Naive thymus-derived CD4-positive, alpha-beta T cell (primary cell): ENCODE measurements at regions of chr4 and their contacts with region 1.

Region 1: GRCh38 chr4:102500696-102501446 is at the start of gene NFKB1:
- DNase-seq: peak; percentile 64 to 95 (median 79)
- ATAC-seq: peak; percentile 85
- H3K4me3 ChIP-seq: peak within 1 kb of the TSS; percentile 96
- H3K4me3 Mint-ChIP-seq: peak within 1 kb of the TSS; percentile 93 to 98 (median 97)
- H3K27ac ChIP-seq: peak within 1 kb of the TSS; percentile 100
- H3K27ac Mint-ChIP-seq: peak within 1 kb of the TSS; percentile 95 to 99 (median 96)
- H3K4me1 ChIP-seq: peaks cover 6 to 22% of the 10 kb centered on the region in 2 donors
- H3K4me1 Mint-ChIP-seq: peaks cover 16 to 35% (median 31%) of the 10 kb centered on the region in 7 donors
- H3K27me3 ChIP-seq: no peaks in the 10 kb centered on the region
- H3K27me3 Mint-ChIP-seq: no peaks in the 10 kb centered on the region
- total RNA-seq, gene NFKB1: 80.9 to 167 (median 136) TPM

Region 2: DNA sequence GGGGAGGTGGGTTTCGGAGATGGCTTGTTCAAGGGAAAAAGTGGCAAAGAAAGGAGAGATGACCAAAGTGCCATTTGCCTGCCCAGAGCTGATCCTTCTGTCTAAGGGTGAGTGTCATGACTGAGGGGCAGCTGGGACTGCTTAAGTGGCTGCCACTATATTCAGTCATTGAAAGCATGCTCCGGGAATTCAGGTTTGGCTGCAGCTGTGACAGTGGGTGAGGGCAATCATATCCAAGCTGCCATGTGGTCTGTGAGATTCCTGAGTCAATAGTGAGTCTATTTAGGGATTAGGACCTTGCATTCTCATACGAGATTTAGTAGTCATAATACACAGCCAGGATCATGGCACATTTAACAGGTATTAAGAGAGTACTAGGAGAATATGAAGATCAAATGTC is 849.1 kb before region 1 on chr4:
- CTCF ChIA-PET with region 1: no interaction called
- POLR2A ChIA-PET with region 1: no interaction called
- intact Hi-C with region 1: no loop called
- DNase-seq: no peak
- ATAC-seq: no peak
- H3K4me3 ChIP-seq: no peak overlapping the region
- H3K4me3 Mint-ChIP-seq: no peak overlapping the region
- H3K27ac ChIP-seq: no peak overlapping the region
- H3K27ac Mint-ChIP-seq: no peak overlapping the region
- H3K4me1 ChIP-seq: no peaks in the 10 kb centered on the region
- H3K4me1 Mint-ChIP-seq: peaks cover 0 to 1% (median 0%) of the 10 kb centered on the region in 7 donors
- H3K27me3 ChIP-seq: no peaks in the 10 kb centered on the region
- H3K27me3 Mint-ChIP-seq: peaks cover 8 to 28% (median 15%) of the 10 kb centered on the region in 5 donors

Region 3: DNA sequence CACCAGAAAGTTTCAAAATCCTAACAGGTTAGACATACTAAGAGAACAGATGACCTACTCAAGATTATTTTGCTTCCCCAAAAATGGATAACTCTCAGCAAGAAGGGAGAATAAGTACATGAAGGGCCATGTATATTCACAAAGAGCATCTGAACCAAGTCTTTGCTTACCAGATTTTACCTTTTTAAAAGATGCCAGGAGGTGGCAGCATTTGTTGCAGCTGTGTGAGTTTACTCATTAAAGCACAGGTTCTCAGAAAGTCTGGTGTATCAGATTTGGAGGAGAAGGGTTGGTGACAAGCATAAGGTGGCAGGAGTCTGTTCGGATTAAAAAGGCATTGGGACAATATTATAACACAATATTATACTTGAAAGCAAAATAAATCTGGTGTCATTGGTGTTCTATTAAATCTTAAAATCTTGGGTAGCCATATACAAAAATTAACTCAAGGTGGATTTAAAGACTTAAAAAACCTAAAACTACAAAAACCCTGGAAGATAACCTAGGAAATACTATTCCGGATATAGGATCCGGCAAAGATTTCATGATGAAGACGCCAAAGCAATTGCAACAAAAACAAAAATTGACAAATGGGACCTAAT is 51.0 kb before region 1 on chr4:
- CTCF ChIA-PET with region 1: no interaction called
- POLR2A ChIA-PET with region 1: no interaction called
- intact Hi-C with region 1: loop called (anchors 2 kb)
- DNase-seq: peak in 7 of 9 donors; percentile 52 to 78 (median 71)
- ATAC-seq: peak; percentile 85
- H3K4me3 ChIP-seq: no peak overlapping the region
- H3K4me3 Mint-ChIP-seq: no peak overlapping the region
- H3K27ac ChIP-seq: no peak overlapping the region
- H3K27ac Mint-ChIP-seq: peak overlapping the region in 2 of 9 donors; percentile 16 to 56
- H3K4me1 ChIP-seq: no peaks in the 10 kb centered on the region
- H3K4me1 Mint-ChIP-seq: peaks cover 2 to 48% (median 9%) of the 10 kb centered on the region in 7 donors
- H3K27me3 ChIP-seq: no peaks in the 10 kb centered on the region
- H3K27me3 Mint-ChIP-seq: peaks cover 0 to 5% (median 0%) of the 10 kb centered on the region in 5 donors

Region 4: DNA sequence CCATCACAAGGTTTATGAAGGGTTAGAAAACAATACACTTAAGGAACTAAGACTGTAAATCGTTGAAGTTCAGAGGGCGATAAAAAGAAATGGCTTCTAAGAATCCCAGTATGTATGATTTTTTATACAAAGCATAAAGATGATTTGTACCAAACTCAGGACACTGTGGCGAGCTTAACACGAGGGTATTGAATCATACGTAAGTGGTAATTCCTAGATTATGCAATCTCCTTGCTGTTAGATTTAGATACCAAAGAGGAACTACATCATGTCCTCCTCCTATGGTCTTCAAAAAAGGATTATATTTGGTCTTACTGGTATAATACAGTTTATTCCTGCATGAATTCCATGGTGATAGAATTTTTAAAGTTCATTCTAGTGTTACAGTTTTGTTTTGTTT is 24.2 kb after region 1 on chr4:
- CTCF ChIA-PET with region 1: interaction called, 4 read pairs
- POLR2A ChIA-PET with region 1: interaction called, 46 read pairs
- intact Hi-C with region 1: loop called (anchors 1 kb)
- DNase-seq: no peak
- ATAC-seq: peak; percentile 51
- H3K4me3 ChIP-seq: no peak overlapping the region
- H3K4me3 Mint-ChIP-seq: peak overlapping the region in 3 of 10 donors; percentile 7 to 56 (median 8)
- H3K27ac ChIP-seq: no peak overlapping the region
- H3K27ac Mint-ChIP-seq: peak overlapping the region in 8 of 9 donors; percentile 11 to 95 (median 75)
- H3K4me1 ChIP-seq: peaks cover 11 to 63% of the 10 kb centered on the region in 2 donors
- H3K4me1 Mint-ChIP-seq: peaks cover 52 to 100% (median 90%) of the 10 kb centered on the region in 7 donors
- H3K27me3 ChIP-seq: no peaks in the 10 kb centered on the region
- H3K27me3 Mint-ChIP-seq: no peaks in the 10 kb centered on the region

Region 5: DNA sequence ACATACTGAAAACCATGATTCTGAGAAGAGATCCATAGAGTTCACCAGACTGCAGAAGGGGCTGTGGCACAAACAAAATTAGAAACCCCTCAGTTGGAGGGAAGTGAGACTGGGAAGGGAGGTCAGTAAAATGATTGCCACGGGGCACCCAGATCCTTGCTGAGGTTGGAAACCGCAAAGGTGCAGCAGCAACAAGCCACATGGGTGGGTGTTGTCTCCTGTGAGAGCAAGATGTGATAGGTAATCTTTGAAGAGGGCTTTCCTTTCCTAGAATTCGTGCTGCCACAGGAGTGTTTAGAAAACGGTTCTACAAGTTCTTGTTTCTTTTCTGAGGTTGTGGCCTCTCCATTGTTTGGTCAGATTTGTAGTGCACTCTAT is 85.8 kb after region 1 on chr4:
- CTCF ChIA-PET with region 1: no interaction called
- POLR2A ChIA-PET with region 1: interaction called, 3 read pairs
- intact Hi-C with region 1: loop called in 1 of 2 experiments (anchors 1 kb)
- DNase-seq: peak in 7 of 9 donors; percentile 10 to 56 (median 37)
- ATAC-seq: peak; percentile 74
- H3K4me3 ChIP-seq: peak overlapping the region; percentile 3
- H3K4me3 Mint-ChIP-seq: peak overlapping the region; percentile 25 to 78 (median 62)
- H3K27ac ChIP-seq: peak overlapping the region; percentile 58
- H3K27ac Mint-ChIP-seq: peak overlapping the region; percentile 68 to 93 (median 84)
- H3K4me1 ChIP-seq: peaks cover 48 to 61% of the 10 kb centered on the region in 2 donors
- H3K4me1 Mint-ChIP-seq: peaks cover 39 to 91% (median 84%) of the 10 kb centered on the region in 7 donors
- H3K27me3 ChIP-seq: no peaks in the 10 kb centered on the region
- H3K27me3 Mint-ChIP-seq: no peaks in the 10 kb centered on the region

Region 6: GRCh38 chr4:102627831-102628523 is 127.1 kb after region 1 on chr4:
- CTCF ChIA-PET with region 1: interaction called, 4 read pairs
- POLR2A ChIA-PET with region 1: interaction called, 16 read pairs
- intact Hi-C with region 1: loop called (anchors 2 kb)
- DNase-seq: no peak
- ATAC-seq: no peak
- H3K4me3 ChIP-seq: no peak overlapping the region
- H3K4me3 Mint-ChIP-seq: peak overlapping the region in 4 of 10 donors; percentile 16 to 92 (median 58)
- H3K27ac ChIP-seq: no peak overlapping the region
- H3K27ac Mint-ChIP-seq: peak overlapping the region in 7 of 9 donors; percentile 15 to 100 (median 87)
- H3K4me1 ChIP-seq: peaks cover 29 to 42% of the 10 kb centered on the region in 2 donors
- H3K4me1 Mint-ChIP-seq: peaks cover 29 to 91% (median 65%) of the 10 kb centered on the region in 7 donors
- H3K27me3 ChIP-seq: no peaks in the 10 kb centered on the region
- H3K27me3 Mint-ChIP-seq: no peaks in the 10 kb centered on the region

Region 7: GRCh38 chr4:103008875-103009729 is 508.2 kb after region 1 on chr4:
- CTCF ChIA-PET with region 1: no interaction called
- POLR2A ChIA-PET with region 1: no interaction called
- intact Hi-C with region 1: loop called in 1 of 2 experiments (anchors 2 kb)
- DNase-seq: peak in 7 of 9 donors; percentile 39 to 67 (median 56)
- ATAC-seq: peak; percentile 93
- H3K4me3 ChIP-seq: no peak overlapping the region
- H3K4me3 Mint-ChIP-seq: no peak overlapping the region
- H3K27ac ChIP-seq: no peak overlapping the region
- H3K27ac Mint-ChIP-seq: no peak overlapping the region
- H3K4me1 ChIP-seq: no peaks in the 10 kb centered on the region
- H3K4me1 Mint-ChIP-seq: peaks cover 0 to 3% (median 0%) of the 10 kb centered on the region in 7 donors
- H3K27me3 ChIP-seq: no peaks in the 10 kb centered on the region
- H3K27me3 Mint-ChIP-seq: peaks cover 0 to 14% (median 0%) of the 10 kb centered on the region in 5 donors

Region 8: DNA sequence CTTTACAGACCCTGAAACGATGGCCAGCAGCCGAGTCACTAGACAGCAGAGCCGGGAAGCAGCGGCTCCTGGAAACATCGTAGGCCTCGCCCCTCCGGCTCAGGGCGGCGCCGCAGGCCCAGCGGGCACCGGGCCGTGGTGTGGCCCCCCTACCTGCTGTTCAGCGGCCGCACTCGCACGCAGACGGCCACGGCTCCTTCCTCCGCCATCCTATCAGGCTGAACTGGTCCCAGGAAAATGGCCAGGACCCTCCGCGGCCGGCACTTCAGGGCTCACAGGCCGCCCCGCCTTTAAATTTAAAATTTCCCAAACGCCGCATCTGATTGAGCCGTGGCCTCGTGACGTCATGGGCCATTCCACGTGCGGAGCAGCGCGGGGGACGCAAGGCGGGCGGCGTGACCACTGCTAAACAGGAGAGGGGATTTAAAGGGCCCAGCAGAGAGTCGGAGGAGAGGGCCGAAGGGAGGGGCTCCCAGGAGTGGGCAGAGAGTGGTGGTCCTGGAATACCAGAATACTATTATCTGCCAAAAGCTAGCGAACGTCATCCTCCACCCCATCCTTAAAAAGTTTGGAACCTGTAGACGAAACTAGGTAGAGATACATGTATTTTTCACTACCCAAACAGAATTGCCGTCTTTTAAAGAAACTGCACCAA is 697.4 kb after region 1 on chr4 and contains the start of gene CENPE:
- CTCF ChIA-PET with region 1: no interaction called
- POLR2A ChIA-PET with region 1: no interaction called
- intact Hi-C with region 1: loop called in 1 of 2 experiments (anchors 5 kb)
- DNase-seq: peak; percentile 77 to 90 (median 87)
- ATAC-seq: peak; percentile 93
- H3K4me3 ChIP-seq: peak within 1 kb of the TSS; percentile 95
- H3K4me3 Mint-ChIP-seq: peak within 1 kb of the TSS; percentile 81 to 99 (median 96)
- H3K27ac ChIP-seq: peak within 1 kb of the TSS; percentile 91
- H3K27ac Mint-ChIP-seq: peak within 1 kb of the TSS; percentile 87 to 100 (median 99)
- H3K4me1 ChIP-seq: peaks cover 0 to 6% of the 10 kb centered on the region in 2 donors
- H3K4me1 Mint-ChIP-seq: peaks cover 6 to 29% (median 10%) of the 10 kb centered on the region in 7 donors
- H3K27me3 ChIP-seq: no peaks in the 10 kb centered on the region
- H3K27me3 Mint-ChIP-seq: peaks cover 0 to 21% (median 7%) of the 10 kb centered on the region in 5 donors
- total RNA-seq, gene CENPE: 1.1 to 35.8 (median 1.5) TPM